PC-3 (cell line): ENCODE measurements at regions of chr3 and their contacts with region 1.

Region 1: GRCh38 chr3:77825001-77825827 is 785.3 kb downstream of the ROBO2 start:
- DNase-seq: peak; percentile 99
- ATAC-seq: peak; percentile 92
- H3K4me3 ChIP-seq: no peak overlapping the region
- H3K27ac ChIP-seq: peak overlapping the region; percentile 92
- H3K4me1 ChIP-seq: peaks cover 34% of the 10 kb centered on the region
- H3K27me3 ChIP-seq: no peaks in the 10 kb centered on the region
- CTCF ChIP-seq: 0 out of 2 replicates have a peak, but pooled peaks have one; percentile 20

Region 2: DNA sequence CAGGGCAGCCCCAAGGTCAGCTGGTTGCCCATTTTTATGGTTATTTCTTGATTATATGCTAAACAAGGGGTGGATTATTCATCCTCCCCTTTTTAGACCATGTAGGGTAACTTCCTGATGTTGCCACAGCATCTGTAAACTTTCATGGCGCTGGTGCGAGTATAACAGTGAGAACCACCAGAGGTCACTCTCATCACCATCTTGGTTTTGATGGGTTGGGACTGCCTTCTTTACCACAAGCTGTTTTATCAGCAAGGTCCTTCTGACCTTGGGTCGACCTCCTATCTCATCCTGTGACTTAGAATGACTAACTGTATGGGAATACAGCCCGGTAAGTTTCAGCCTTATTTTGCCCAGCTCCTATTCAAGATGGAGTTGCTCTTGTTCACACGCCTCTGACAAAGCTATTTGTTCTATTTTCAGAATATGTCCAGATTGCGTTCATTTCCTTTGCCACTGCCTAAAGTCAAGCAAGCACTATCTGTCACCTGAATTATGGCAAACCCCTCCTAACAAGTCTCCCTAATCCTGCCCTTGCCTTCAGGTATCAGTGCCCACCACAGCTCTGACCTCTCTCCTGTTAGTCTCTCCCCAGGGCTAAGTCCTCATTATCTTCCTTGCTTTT is 476.9 kb before region 1 on chr3:
- CTCF ChIA-PET with region 1: no interaction called
- POLR2A ChIA-PET with region 1: no interaction called
- intact Hi-C with region 1: loop called (anchors 10 kb)
- DNase-seq: peak; percentile 63
- ATAC-seq: peak; percentile 81
- H3K4me3 ChIP-seq: no peak overlapping the region
- H3K27ac ChIP-seq: no peak overlapping the region
- H3K4me1 ChIP-seq: no peaks in the 10 kb centered on the region
- H3K27me3 ChIP-seq: no peaks in the 10 kb centered on the region
- CTCF ChIP-seq: peak; percentile 70

Region 3: DNA sequence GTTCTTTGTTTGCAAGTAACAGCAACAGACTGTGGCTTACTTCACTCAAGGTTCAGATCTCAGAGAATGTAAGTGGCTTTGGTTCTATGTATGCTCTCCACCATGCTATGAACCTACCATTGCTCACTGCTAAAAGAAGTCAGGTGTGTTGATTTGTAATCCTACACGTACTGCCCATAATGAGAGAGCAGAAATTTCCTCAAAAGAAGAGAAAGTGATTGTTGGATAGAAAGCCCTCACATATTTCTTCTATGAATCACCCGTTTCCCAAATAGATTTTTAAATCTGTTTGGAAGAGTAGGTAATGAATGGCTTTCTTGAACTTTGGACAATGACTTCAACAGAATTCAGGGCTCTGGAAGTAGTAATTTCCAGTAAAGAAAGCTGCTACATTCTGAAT is 219.9 kb before region 1 on chr3:
- CTCF ChIA-PET with region 1: no interaction called
- POLR2A ChIA-PET with region 1: no interaction called
- intact Hi-C with region 1: loop called (anchors 1 kb)
- DNase-seq: peak; percentile 78
- ATAC-seq: peak; percentile 38
- H3K4me3 ChIP-seq: no peak overlapping the region
- H3K27ac ChIP-seq: peak overlapping the region; percentile 87
- H3K4me1 ChIP-seq: peaks cover 31% of the 10 kb centered on the region
- H3K27me3 ChIP-seq: no peaks in the 10 kb centered on the region
- CTCF ChIP-seq: no peak

Region 4: DNA sequence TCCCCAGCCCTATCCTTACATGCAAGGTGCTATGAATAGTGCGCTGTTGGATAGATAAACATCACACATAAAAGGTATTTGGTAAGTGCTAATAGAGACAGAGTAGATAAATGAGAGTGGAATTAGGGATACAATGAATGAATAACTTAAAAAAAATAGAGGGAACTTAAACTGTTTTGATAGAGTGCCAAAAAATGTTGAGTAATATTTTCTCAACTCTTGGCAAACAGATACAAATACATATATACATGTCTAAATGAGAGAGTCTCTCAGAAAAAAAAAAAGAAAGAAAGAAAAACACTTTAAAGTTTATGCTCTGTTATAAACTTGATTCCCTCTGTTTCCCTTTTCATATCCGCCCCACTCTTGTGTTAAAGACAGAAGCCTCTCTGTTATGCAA is 117.9 kb before region 1 on chr3:
- CTCF ChIA-PET with region 1: no interaction called
- POLR2A ChIA-PET with region 1: no interaction called
- intact Hi-C with region 1: no loop called
- DNase-seq: peak; percentile 56
- ATAC-seq: peak; percentile 33
- H3K4me3 ChIP-seq: no peak overlapping the region
- H3K27ac ChIP-seq: no peak overlapping the region
- H3K4me1 ChIP-seq: 0 out of 2 replicates have a peak, but pooled peaks cover 4% of the 10 kb centered on the region
- H3K27me3 ChIP-seq: no peaks in the 10 kb centered on the region
- CTCF ChIP-seq: no peak

Region 5: DNA sequence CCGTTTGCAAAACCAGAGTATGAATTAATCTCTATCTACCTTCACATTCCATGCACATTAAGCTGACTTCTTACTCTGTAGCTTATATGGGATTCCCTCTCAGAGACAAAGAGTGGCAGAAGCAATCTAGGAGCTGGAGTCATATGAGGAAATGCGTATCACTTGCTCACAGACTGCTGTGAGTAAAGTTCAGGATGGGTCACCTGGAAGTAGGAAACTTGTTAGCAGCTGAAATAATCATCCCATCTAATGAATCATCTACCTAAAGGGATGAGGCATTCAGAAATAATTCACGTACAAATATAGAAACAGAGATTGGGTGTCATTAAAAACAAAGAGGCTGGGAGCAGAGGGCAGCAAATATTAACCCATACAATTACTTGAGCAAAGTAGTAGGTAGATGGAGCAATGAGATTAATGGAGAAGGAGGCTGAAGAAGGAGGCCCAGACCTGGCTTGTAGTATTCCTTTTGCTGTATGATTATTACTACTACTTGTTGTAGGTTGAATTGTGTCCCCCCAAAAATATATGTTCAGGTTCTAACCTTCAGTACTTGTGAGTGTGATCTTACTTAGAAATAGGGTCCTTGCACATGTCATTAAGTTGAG is 81.0 kb after region 1 on chr3:
- CTCF ChIA-PET with region 1: no interaction called
- POLR2A ChIA-PET with region 1: no interaction called
- intact Hi-C with region 1: loop called (anchors 5 kb)
- DNase-seq: peak; percentile 96
- ATAC-seq: peak; percentile 95
- H3K4me3 ChIP-seq: no peak overlapping the region
- H3K27ac ChIP-seq: peak overlapping the region; percentile 95
- H3K4me1 ChIP-seq: peaks cover 24% of the 10 kb centered on the region
- H3K27me3 ChIP-seq: no peaks in the 10 kb centered on the region
- CTCF ChIP-seq: no peak; the same call in 1 of the 2 replicates